ENCODE measurements at regions of chr16 and their contacts with region 1.

Region 1: GRCh38 chr16:78778101-78779004 is 678.9 kb downstream of the WWOX start:
- DNase-seq: peak; percentile 90
- ATAC-seq: peak; percentile 84
- H3K4me3 Mint-ChIP-seq: peak overlapping the region; percentile 40
- H3K27ac Mint-ChIP-seq: peak overlapping the region; percentile 89
- H3K4me1 Mint-ChIP-seq: peaks cover 84% of the 10 kb centered on the region
- H3K27me3 Mint-ChIP-seq: no peaks in the 10 kb centered on the region

Region 2: DNA sequence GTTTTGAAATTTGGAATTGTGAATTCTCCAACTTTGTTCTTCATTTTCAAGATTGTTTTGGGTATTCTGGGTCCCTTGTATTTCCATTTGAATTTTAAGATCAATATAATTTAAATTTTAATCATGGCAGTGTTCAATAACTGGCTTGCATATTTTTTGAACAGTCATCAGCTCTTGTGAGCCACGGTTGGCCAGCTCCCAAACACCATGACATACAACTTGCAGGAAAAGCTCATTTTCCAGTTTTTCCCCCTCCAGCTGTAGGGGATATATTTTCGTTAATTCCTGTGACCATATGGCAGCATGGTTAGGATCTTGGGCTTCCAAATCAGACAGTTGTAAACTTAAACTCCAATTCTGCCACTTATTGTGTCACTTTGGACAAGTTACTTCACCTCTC is 11.2 kb after region 1 on chr16:
- CTCF ChIA-PET with region 1: interaction called, 11 read pairs
- DNase-seq: no peak
- ATAC-seq: no peak
- H3K4me3 Mint-ChIP-seq: no peak overlapping the region
- H3K27ac Mint-ChIP-seq: no peak overlapping the region
- H3K4me1 Mint-ChIP-seq: peaks cover 41% of the 10 kb centered on the region
- H3K27me3 Mint-ChIP-seq: no peaks in the 10 kb centered on the region

Region 3: GRCh38 chr16:78800523-78800922 is 22.2 kb after region 1 on chr16:
- CTCF ChIA-PET with region 1: interaction called, 12 read pairs
- DNase-seq: no peak
- ATAC-seq: peak; percentile 77
- H3K4me3 Mint-ChIP-seq: no peak overlapping the region
- H3K27ac Mint-ChIP-seq: peak overlapping the region; percentile 54
- H3K4me1 Mint-ChIP-seq: peaks cover 34% of the 10 kb centered on the region
- H3K27me3 Mint-ChIP-seq: no peaks in the 10 kb centered on the region

Measured in activated CD8-positive, alpha-beta memory T cell treated with anti-CD3 and anti-CD28 coated beads, Interleukin-2, amount 10 ng/mL, durations not matched to agents 7 days and 5 days (primary cell).